Activated naive CD4-positive, alpha-beta T cell treated with anti-CD3 and anti-CD28 coated beads for 36 hours (primary cell): ENCODE measurements at regions of chr10 and their contacts with region 1.

Region 1: DNA sequence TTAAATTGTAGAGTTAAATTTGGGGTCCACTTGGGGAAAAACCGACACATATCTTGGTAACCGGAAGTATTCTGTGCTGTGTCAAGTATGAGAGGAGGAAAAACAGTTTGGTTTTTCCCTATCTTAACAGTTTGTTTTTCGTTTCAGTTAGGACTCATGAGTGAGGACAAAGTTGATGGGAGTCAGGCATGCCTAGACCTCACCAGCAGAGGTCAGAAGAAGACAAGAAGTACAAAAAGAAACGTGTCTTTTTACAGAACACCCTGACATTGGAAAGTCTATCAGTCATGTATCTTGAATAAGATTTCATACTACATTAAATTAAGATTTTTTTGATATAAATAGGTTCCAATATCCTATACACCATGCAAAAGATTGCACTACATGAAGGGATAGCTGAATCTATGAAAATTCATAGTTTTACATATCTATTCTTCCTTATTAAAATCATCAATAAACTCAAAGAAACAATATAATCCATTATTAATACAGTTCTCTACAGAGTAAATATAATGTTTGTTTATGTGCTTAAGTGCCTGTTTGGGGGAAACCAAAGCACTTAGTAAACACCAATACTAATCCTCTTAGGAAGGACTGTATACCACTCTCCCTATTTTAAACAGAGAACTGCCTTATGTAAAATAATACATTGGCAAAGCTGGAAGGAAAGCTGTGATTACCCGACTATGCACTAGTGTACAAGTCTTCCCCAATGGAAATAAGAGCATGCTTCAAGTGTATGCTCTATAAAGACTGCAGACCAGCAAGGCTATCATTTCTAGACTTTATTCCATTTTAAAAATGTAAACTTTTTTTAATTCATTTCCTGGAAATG is 95.6 kb downstream of the USP6NL start:
- DNase-seq: peak; percentile 73
- H3K4me3 Mint-ChIP-seq: peak overlapping the region; percentile 10
- H3K27ac Mint-ChIP-seq: peak overlapping the region; percentile 25
- H3K4me1 Mint-ChIP-seq: peaks cover 21% of the 10 kb centered on the region
- H3K27me3 Mint-ChIP-seq: no peaks in the 10 kb centered on the region

Region 2: DNA sequence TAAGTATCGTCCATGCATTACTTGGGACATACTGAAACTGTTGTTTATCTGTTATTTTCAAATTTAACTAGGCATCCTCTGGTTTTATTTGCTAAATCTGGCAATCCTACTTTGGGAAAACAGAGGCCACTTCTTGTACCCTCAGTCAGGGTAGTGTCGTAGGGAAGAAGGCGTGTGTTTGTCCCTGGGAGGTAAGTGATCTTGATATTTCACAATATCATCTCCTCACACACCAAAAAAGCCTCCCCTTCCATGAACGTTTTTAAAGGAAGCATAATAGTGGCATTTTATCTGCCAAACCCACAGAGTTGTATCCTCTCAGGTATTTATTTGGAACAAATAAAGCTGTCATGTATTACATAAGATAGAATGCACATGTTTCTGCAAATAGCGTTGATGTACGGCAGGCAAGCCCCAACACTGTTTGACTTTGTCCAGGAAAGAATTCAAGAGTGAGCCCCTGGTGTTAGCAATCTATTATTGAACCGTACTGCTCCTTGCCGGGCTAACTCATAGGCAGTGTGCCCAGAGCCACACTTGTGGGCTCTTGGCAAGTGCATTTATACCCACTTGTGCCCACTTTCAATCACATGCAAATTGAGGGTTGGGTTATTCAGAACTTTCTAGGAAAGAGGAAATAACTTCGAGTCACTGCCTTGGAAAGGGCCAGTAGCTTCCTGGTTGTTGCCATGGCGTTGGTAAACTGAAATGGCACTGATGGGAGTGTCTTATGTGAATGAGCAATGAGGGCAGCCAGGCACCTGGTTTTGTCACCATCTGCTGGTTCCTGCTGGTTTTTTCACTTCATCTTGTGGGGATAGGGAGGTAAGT is 170.4 kb before region 1 on chr10:
- CTCF ChIA-PET with region 1: no interaction called
- intact Hi-C with region 1: no loop called
- DNase-seq: peak; percentile 72
- H3K4me3 Mint-ChIP-seq: no peak overlapping the region
- H3K27ac Mint-ChIP-seq: no peak overlapping the region
- H3K4me1 Mint-ChIP-seq: peaks cover 4% of the 10 kb centered on the region
- H3K27me3 Mint-ChIP-seq: no peaks in the 10 kb centered on the region

Region 3: DNA sequence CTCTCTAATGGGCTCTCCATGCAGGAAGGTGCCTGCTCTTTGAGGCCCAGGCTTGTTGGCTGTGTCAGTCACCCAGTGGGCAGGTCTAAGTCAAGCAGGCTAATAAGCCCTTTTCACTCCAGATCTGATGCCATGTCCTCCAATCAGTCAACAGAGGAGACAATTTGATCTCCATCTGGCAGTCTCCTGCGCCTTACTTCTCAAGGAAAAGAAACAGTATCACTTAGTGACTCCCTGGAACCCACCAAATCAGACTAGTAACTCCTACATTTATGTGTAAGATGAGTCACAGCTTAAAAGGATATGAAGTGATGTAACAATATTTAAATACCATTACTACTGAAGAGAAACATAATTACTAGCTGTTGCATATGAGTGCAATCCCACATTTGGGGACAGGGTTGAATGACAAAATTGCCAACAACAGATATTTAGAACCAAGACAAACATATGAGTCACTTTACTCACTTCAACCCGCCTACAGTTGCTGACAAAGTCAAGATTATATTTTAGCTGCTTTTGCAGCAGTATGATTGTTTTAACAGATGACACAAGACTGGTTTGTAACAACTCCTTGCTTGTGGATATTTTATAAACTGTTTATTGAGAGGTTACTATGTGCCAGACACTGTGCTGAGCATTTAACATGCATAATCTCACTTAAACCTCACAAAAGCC is 23.5 kb after region 1 on chr10:
- CTCF ChIA-PET with region 1: interaction called, 5 read pairs
- intact Hi-C with region 1: loop called (anchors 1 kb)
- DNase-seq: peak; percentile 25
- H3K4me3 Mint-ChIP-seq: no peak overlapping the region
- H3K27ac Mint-ChIP-seq: no peak overlapping the region
- H3K4me1 Mint-ChIP-seq: peaks cover 19% of the 10 kb centered on the region
- H3K27me3 Mint-ChIP-seq: no peaks in the 10 kb centered on the region

Region 4: DNA sequence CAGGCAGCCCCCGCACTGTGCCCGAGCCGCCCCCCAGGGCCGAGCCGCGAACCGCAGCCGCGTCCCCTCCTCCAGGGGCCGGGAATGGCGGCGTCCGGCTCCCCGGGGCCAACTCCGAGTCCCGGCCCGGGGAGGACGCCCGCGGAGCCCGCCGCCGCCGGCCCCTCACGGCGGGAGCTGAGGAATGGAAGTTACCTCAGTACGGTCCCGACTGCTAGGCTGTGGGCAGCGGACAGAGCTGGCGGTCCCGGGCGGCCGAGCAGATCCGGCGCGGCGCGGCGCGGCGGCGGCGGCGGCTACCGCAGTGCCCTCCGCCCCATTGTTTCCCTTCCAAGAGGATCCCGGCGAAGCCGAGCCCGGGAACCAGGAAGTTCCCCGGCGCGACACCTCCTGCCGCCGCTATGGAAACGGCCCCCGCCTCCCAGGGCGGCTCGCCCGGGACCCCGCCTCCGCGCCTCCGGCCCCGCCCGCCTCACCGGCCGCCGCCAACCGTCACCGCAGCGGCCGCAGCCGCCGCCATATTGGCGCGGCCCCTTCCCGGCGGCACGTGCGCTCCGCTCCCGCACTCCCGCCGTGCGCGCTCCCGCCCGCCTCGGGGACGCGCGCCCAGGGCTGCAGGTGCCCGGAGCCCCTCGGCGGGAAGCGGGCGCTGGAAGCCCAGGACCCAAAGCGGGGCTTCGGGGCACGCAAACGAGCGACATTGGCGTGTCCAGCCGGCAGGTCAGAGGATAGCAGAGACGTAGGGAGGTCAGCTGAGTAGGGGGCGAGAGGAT is 95.6 kb after region 1 on chr10 and contains the start of gene USP6NL:
- CTCF ChIA-PET with region 1: interaction called, 13 read pairs
- intact Hi-C with region 1: loop called (anchors 1 kb)
- DNase-seq: peak; percentile 70
- H3K4me3 Mint-ChIP-seq: peak within 1 kb of the TSS; percentile 84
- H3K27ac Mint-ChIP-seq: peak within 1 kb of the TSS; percentile 73
- H3K4me1 Mint-ChIP-seq: peaks cover 40% of the 10 kb centered on the region
- H3K27me3 Mint-ChIP-seq: no peaks in the 10 kb centered on the region
- total RNA-seq, gene USP6NL: 6.9 to 7.5 TPM

Region 5: DNA sequence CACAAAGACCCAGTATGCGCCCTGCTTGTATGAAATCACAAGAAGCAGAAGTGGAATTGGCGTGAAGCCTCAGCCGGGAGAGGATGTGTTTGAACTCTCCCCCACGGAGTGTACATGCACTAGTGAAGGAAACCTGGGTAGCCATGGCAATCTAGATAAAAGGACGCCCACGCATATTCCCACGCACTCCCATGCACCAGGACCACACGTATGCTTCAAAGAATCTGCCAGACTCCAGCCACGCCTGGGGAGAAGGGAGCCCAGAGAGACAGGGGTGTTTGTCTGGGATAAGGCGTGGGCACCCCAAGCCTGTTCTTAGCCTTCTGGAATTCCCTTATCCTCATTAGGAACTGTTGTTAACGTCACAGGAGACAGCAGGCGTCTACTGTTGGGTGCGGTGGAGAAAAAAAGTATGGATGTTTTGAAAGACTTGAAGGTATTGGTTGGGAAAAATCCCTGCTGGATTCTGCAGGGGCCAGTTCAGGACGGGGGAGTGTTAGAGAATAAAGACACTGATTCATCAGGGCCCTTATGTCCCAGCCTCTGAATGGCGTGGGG is 197.5 kb after region 1 on chr10:
- CTCF ChIA-PET with region 1: interaction called, 6 read pairs
- intact Hi-C with region 1: loop called (anchors 1 kb)
- DNase-seq: no peak
- H3K4me3 Mint-ChIP-seq: no peak overlapping the region
- H3K27ac Mint-ChIP-seq: no peak overlapping the region
- H3K4me1 Mint-ChIP-seq: peaks cover 17% of the 10 kb centered on the region
- H3K27me3 Mint-ChIP-seq: peaks cover 32% of the 10 kb centered on the region

Region 6: GRCh38 chr10:11823122-11823988 is 307.5 kb after region 1 on chr10 and contains the start of gene PROSER2:
- CTCF ChIA-PET with region 1: interaction called, 4 read pairs
- intact Hi-C with region 1: loop called (anchors 1 kb)
- DNase-seq: peak; percentile 21
- H3K4me3 Mint-ChIP-seq: peak within 1 kb of the TSS; percentile 71
- H3K27ac Mint-ChIP-seq: no peak within 1 kb of the TSS
- H3K4me1 Mint-ChIP-seq: peaks cover 7% of the 10 kb centered on the region
- H3K27me3 Mint-ChIP-seq: peaks cover 37% of the 10 kb centered on the region
- total RNA-seq, gene PROSER2: 0.57 to 0.83 TPM

Region 7: DNA sequence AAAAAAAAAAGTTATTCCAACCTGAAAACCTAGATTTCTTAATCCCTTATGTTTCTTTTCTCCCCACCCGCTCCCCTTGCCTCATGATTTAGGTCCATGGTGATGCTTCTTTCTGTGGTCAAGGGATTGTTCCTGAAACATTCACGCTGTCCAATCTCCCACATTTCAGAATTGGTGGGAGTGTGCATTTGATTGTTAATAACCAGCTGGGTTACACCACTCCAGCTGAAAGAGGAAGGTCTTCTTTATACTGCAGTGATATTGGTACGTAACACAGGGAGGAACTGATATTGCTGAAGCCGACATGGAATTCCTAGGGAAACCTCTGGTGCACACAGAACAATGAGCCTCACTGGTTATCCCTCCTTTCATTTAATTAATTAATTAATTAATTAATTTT is 575.6 kb after region 1 on chr10:
- CTCF ChIA-PET with region 1: no interaction called
- intact Hi-C with region 1: no loop called
- DNase-seq: no peak
- H3K4me3 Mint-ChIP-seq: no peak overlapping the region
- H3K27ac Mint-ChIP-seq: no peak overlapping the region
- H3K4me1 Mint-ChIP-seq: no peaks in the 10 kb centered on the region
- H3K27me3 Mint-ChIP-seq: no peaks in the 10 kb centered on the region